Heart left ventricle (tissue), 16 donors: ENCODE measurements at regions of chr2 and their contacts with region 1.

Region 1: GRCh38 chr2:18067588-18068384 is 189.3 kb downstream of the KCNS3 start:
- DNase-seq: peak in 3 of 5 donors; percentile 35 to 50 (median 50)
- ATAC-seq: peak in 3 of 4 donors; percentile 57 to 71 (median 71)
- H3K4me3 ChIP-seq: peak overlapping the region in 4 of 12 donors; percentile 15 to 31 (median 22)
- H3K27ac ChIP-seq: peak overlapping the region in 7 of 12 donors; percentile 5 to 46 (median 35)
- H3K4me1 ChIP-seq: peaks cover 0 to 41% (median 6%) of the 10 kb centered on the region in 12 donors
- H3K27me3 ChIP-seq: no peaks in the 10 kb centered on the region
- CTCF ChIP-seq: no peak
- POLR2A ChIP-seq: no peak

Region 2: GRCh38 chr2:17709897-17710296 is 357.9 kb before region 1 on chr2:
- intact Hi-C with region 1: loop called in 1 of 10 experiments (anchors 10 kb)
- DNase-seq: no peak
- ATAC-seq: peak; percentile 47 to 88 (median 68)
- H3K4me3 ChIP-seq: no peak overlapping the region
- H3K27ac ChIP-seq: no peak overlapping the region
- H3K4me1 ChIP-seq: peaks cover 0 to 11% (median 0%) of the 10 kb centered on the region in 12 donors
- H3K27me3 ChIP-seq: no peaks in the 10 kb centered on the region
- CTCF ChIP-seq: no peak
- POLR2A ChIP-seq: no peak

Region 3: DNA sequence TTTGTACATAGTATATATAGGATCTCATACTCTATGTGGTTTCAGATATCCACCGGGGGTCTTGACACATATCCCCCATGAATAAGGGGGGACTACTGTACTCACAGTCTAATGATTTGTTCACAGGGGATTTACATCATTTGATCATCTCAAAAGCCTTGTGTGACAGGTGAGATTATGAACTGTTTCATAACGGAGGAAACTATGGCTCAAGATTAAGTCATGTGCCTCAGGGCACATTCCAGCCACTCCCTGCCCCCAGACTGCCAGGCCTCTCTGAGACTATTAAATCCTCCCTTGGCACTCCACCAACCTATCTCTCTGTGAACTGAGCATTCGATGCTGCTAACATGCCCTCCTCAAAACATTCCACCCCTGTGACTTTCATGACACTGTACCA is 19.9 kb before region 1 on chr2:
- intact Hi-C with region 1: loop called in 1 of 10 experiments (anchors 2 kb)
- DNase-seq: peak in 1 of 5 donors; percentile 45
- ATAC-seq: peak in 3 of 4 donors; percentile 36 to 48 (median 48)
- H3K4me3 ChIP-seq: no peak overlapping the region
- H3K27ac ChIP-seq: peak overlapping the region in 5 of 12 donors; percentile 28 to 69 (median 63)
- H3K4me1 ChIP-seq: peaks cover 0 to 30% (median 0%) of the 10 kb centered on the region in 12 donors
- H3K27me3 ChIP-seq: no peaks in the 10 kb centered on the region
- CTCF ChIP-seq: no peak
- POLR2A ChIP-seq: no peak